ENCODE measurements at regions of chr11 and their contacts with region 1.

Region 1: DNA sequence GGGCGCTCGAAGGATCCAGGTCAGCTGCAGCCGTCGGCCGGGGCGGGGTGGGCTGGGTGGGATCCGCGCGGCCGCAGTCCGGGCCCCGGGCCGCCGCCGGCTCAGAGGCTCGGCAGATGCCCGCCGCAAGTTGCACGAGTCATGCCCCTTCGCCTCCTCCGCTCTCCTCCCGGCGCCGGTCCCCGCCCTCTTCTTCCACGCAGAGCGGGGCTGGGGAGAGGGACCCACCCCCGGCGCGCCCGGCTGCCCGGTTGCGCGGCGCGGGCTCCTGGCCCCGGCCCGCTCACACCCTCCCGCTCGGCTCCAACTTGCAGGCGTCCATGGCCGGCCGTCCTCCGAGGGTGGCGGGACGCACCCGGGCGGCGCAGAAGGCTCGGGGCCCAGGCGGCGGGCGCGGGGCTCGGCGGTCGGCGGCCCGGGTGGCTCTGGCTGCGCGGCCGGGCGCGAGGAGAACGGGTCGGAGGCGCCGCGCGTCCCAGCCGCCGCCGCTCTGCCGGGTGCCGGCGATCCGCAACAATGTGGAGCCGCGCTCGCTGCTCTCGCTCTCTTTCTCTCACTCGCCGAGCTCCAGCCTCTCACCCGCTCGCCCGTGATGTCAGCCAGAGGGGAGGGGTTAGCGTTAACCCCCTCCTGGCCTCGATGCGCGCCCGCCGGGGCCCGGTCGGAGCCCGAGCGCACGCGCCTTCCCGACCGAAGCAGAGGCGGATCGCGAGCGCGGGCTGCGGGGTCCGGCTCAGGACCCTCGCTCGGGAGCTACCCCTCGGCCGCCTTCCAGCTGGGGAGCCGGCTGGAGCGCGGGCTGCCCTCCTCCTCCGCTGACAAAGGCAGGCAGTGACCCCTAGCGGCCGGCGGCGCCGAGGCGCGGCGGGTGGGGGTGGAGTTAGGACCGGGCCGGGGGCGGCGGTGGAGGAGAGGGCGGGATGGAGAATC is at the start of gene NECTIN1:
- DNase-seq: peak; percentile 84
- H3K4me3 Mint-ChIP-seq: peak within 1 kb of the TSS; percentile 77
- H3K27ac Mint-ChIP-seq: peak within 1 kb of the TSS; percentile 32
- H3K4me1 Mint-ChIP-seq: peaks cover 13% of the 10 kb centered on the region
- H3K27me3 Mint-ChIP-seq: peaks cover 57% of the 10 kb centered on the region
- total RNA-seq, gene NECTIN1: 1.7 to 1.9 TPM

Region 2: DNA sequence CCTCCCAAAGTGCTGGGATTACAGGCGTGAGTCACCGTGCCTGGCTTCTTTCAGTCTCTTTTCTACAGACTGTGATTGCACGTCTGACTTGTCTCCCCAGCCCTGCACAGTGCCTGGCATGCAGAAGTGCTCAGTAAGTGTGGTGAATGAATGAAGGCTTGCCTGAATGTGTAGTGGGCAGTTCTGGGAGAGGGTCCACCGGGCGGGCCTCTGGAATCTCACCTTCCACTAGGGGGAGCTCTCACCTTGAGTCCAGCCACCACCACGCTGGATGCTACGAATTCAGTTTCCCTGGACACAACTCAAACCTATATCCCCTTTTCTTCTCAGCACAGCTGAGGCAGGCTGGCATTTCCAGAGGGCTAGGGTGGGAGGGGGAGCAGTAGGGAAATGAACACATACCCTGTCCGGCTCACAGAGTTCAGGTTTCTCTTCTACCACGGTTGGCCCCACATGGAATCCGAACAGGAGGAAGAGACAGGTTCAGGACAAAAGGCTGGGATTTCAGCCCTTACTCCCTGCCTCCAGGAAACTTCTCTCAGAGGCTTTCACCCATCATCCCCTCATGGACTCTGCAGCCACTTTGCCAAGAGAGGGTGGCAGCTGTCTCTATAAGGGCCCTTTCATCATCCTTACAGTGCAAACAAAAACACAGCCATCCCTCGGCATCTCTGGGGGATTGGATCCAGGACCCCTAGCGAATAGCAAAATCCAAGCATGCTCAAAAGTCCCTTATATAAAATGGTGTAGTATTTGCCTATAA is 86.8 kb before region 1 on chr11:
- CTCF ChIA-PET with region 1: interaction called, 40 read pairs
- POLR2A ChIA-PET with region 1: no interaction called
- DNase-seq: no peak
- H3K4me3 Mint-ChIP-seq: no peak overlapping the region
- H3K27ac Mint-ChIP-seq: no peak overlapping the region
- H3K4me1 Mint-ChIP-seq: no peaks in the 10 kb centered on the region
- H3K27me3 Mint-ChIP-seq: peaks cover 1% of the 10 kb centered on the region

Region 3: DNA sequence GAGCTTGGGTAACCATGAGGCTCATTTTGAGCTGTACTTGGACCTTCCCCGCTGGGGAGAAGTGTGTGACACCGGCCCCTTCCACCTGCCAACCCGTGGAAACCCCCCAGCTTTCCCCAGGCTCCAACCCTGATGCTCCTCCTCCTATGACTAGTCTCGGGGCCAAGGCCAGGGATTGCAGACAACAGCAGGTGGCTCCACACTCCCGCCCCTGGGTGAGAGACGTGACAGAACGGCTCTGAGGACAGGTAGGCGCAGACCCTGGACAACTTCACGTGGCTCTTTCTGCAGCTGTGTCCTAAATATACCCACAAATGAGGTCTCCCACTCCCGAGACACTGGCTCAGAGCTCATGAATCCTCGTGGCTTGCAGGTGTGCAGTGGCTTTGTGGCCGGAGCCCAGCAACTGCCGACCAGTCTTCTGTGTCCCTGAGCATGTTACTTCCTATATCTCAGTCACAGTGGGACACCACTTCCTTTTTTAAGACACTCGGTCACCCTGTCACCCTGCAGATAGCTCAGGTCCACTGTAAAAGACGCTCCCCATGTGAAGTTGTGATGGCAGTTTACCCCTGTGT is 55.1 kb before region 1 on chr11:
- CTCF ChIA-PET with region 1: interaction called, 52 read pairs
- POLR2A ChIA-PET with region 1: interaction called, 3 read pairs
- DNase-seq: peak; percentile 43
- H3K4me3 Mint-ChIP-seq: no peak overlapping the region
- H3K27ac Mint-ChIP-seq: no peak overlapping the region
- H3K4me1 Mint-ChIP-seq: peaks cover 12% of the 10 kb centered on the region
- H3K27me3 Mint-ChIP-seq: peaks cover 7% of the 10 kb centered on the region

Region 4: DNA sequence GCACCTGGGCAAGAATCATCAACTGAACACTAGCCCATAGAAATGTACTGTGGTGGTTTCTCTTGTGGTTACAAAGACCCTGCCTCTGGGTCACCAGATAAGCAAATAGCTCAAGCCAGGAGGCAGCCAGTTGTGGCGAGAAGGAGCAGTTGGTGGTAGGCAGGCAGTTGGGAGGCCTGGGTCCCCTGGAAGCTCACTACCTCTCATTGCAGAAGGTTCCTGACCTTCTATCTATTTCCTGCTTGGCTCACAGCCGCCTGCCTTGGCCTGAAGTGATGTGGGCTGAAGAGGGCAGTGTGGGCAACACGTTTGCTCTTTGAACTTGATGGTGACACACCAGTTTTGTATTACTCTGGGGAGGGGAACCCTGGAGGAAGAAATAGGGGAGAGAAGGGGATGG is 34.6 kb before region 1 on chr11:
- CTCF ChIA-PET with region 1: interaction called, 44 read pairs
- POLR2A ChIA-PET with region 1: interaction called, 4 read pairs
- DNase-seq: no peak
- H3K4me3 Mint-ChIP-seq: no peak overlapping the region
- H3K27ac Mint-ChIP-seq: no peak overlapping the region
- H3K4me1 Mint-ChIP-seq: peaks cover 42% of the 10 kb centered on the region
- H3K27me3 Mint-ChIP-seq: peaks cover 7% of the 10 kb centered on the region

Region 5: GRCh38 chr11:119717839-119718534 is 10.9 kb before region 1 on chr11:
- CTCF ChIA-PET with region 1: interaction called, 12 read pairs
- POLR2A ChIA-PET with region 1: no interaction called
- DNase-seq: no peak
- H3K4me3 Mint-ChIP-seq: no peak overlapping the region
- H3K27ac Mint-ChIP-seq: no peak overlapping the region
- H3K4me1 Mint-ChIP-seq: no peaks in the 10 kb centered on the region
- H3K27me3 Mint-ChIP-seq: peaks cover 6% of the 10 kb centered on the region

Region 6: GRCh38 chr11:119774172-119774763 is 45.4 kb after region 1 on chr11:
- CTCF ChIA-PET with region 1: no interaction called
- POLR2A ChIA-PET with region 1: no interaction called
- DNase-seq: no peak
- H3K4me3 Mint-ChIP-seq: no peak overlapping the region
- H3K27ac Mint-ChIP-seq: no peak overlapping the region
- H3K4me1 Mint-ChIP-seq: no peaks in the 10 kb centered on the region
- H3K27me3 Mint-ChIP-seq: no peaks in the 10 kb centered on the region

Region 7: GRCh38 chr11:120324932-120325810 is 596.3 kb after region 1 on chr11 and contains the start of gene TLCD5:
- CTCF ChIA-PET with region 1: no interaction called
- POLR2A ChIA-PET with region 1: no interaction called
- DNase-seq: peak; percentile 52
- H3K4me3 Mint-ChIP-seq: peak within 1 kb of the TSS; percentile 68
- H3K27ac Mint-ChIP-seq: peak within 1 kb of the TSS; percentile 3
- H3K4me1 Mint-ChIP-seq: peaks cover 22% of the 10 kb centered on the region
- H3K27me3 Mint-ChIP-seq: peaks cover 49% of the 10 kb centered on the region
- total RNA-seq, gene TLCD5: 1.2 to 1.4 TPM